Adrenal gland (tissue), 19 donors: ENCODE measurements at regions of chr15 and their contacts with region 1.

Region 1: DNA sequence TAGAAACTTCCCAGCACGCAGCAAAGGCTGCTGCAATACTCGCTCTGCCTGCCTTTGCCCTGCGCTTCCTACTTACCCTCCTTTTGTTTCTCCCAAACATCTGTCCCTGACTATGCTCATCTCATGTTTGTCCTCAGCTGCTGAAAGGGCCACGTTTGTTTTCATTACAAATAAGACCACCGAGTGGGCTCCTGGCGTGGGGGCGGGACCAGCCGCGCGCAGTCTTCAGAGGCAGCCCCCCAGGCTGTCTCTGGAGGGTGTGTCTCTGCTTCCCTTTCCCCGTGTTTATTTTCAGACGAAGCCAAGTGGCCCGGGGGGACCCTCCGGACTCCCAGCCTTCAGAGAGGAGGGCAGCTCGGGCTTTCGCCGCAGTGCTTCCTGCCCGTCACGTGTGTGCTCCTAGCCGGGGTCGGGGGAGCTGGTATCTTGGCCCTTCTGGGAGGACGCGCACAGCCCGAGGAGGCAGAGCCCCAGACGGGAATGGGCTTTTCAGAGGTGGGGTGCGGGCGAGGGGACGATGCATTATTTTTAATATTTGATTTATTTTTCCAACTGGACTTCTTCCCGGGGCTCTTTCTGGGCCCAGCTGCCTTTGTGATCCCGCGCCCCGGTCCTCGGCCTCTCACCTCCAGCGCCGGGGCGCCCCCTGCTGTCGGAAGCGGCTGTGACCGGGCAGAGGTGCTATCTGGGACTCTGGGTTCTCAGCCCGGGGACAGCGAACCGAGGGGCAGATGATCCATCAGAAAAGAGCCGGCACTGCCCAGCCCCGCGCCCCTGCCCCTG is 70.0 kb upstream of the CGNL1 start:
- DNase-seq: peak; percentile 78 to 90 (median 88)
- H3K4me3 ChIP-seq: peak overlapping the region in 3 of 4 donors; percentile 20 to 70 (median 29)
- H3K27ac ChIP-seq: peak overlapping the region in 1 of 5 donors; percentile 17
- H3K4me1 ChIP-seq: peaks cover 3 to 14% of the 10 kb centered on the region in 2 donors
- H3K27me3 ChIP-seq: no peaks in the 10 kb centered on the region
- CTCF ChIP-seq: peak; percentile 77 to 89 (median 81)
- POLR2A ChIP-seq: no peak

Region 2: GRCh38 chr15:56496635-56497034 is 809.7 kb before region 1 on chr15:
- intact Hi-C with region 1: loop called in 1 of 2 experiments (anchors 5 kb)
- DNase-seq: peak in 1 of 7 donors; percentile 16
- H3K4me3 ChIP-seq: peak overlapping the region in 1 of 4 donors; percentile 11
- H3K27ac ChIP-seq: no peak overlapping the region
- H3K4me1 ChIP-seq: no peaks in the 10 kb centered on the region
- H3K27me3 ChIP-seq: no peaks in the 10 kb centered on the region
- CTCF ChIP-seq: peak; percentile 45 to 83 (median 75)
- POLR2A ChIP-seq: no peak

Region 3: GRCh38 chr15:56821721-56822425 is 484.5 kb before region 1 on chr15:
- intact Hi-C with region 1: loop called in 1 of 2 experiments (anchors 5 kb)
- DNase-seq: peak; percentile 46 to 87 (median 68)
- H3K4me3 ChIP-seq: no peak overlapping the region
- H3K27ac ChIP-seq: no peak overlapping the region
- H3K4me1 ChIP-seq: no peaks in the 10 kb centered on the region
- H3K27me3 ChIP-seq: no peaks in the 10 kb centered on the region
- CTCF ChIP-seq: peak; percentile 58 to 81 (median 76)
- POLR2A ChIP-seq: no peak

Region 4: DNA sequence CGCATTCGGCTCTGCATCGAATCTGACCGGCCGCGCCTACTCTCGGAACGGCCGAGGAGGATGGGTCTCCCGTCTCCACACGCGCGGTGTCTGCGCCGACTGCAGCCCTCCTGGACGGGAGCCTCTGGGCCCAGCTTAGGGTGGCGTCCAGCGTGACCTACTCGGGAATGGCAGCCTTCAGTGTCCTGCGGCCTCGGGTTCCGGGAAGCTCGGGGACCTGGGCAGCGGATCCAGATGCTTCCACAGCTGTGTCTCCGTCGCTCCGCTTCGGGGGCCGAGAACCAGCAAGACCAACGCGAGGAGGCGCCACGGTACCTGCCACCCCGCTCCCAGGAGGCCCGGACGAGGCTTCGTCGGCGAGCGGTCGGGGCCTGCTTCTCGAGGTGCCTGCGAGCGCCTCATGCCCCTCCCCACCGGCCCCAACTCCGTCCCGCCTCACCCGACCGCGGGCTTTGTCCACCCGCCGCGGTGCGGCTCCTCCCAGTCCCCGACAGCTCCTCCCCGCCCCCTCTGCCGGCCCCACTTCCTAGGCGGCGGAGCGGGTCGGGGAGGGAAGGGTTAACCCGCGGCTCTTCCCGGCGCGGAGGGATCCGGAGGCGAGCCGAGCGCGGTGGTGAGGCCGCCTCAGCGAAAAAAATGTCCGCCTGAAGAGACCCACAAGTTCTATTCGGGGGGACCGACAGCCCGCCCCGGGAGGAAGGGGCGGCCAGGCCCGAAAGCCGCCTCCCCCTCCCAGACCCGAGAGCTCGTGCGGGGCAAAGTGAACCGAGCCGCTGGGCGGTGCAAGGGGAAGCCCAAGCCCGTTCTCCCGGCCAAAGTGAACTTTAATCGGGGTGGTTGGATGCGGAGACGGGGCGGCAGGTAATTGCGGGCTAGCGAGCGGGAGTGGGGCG is 388.1 kb before region 1 on chr15 and contains the start of gene TCF12:
- intact Hi-C with region 1: loop called in 1 of 2 experiments (anchors 10 kb)
- DNase-seq: peak; percentile 92 to 96 (median 94)
- H3K4me3 ChIP-seq: peak within 1 kb of the TSS; percentile 30 to 98 (median 65)
- H3K27ac ChIP-seq: peak within 1 kb of the TSS; percentile 85 to 99 (median 97)
- H3K4me1 ChIP-seq: peaks cover 14 to 47% of the 10 kb centered on the region in 2 donors
- H3K27me3 ChIP-seq: no peaks in the 10 kb centered on the region
- CTCF ChIP-seq: peak in 5 of 6 experiments; percentile 28 to 47 (median 36)
- POLR2A ChIP-seq: peak; percentile 28 to 76
- total RNA-seq, gene TCF12: 51.6 to 121 (median 87.5) TPM

Region 5: GRCh38 chr15:57146506-57147201 is 159.7 kb before region 1 on chr15:
- intact Hi-C with region 1: loop called (anchors 10 kb)
- DNase-seq: peak in 1 of 7 donors; percentile 25
- H3K4me3 ChIP-seq: peak overlapping the region in 1 of 4 donors; percentile 13
- H3K27ac ChIP-seq: peak overlapping the region in 1 of 5 donors; percentile 17
- H3K4me1 ChIP-seq: peaks cover 8 to 35% of the 10 kb centered on the region in 2 donors
- H3K27me3 ChIP-seq: no peaks in the 10 kb centered on the region
- CTCF ChIP-seq: peak; percentile 64 to 84 (median 68)
- POLR2A ChIP-seq: no peak